PC-9 (cell line): ENCODE measurements at regions of chr3 and their contacts with region 1.

Region 1: GRCh38 chr3:24299806-24300626 is 194.6 kb downstream of the THRB start:
- DNase-seq: peak; percentile 75 to 91
- H3K4me3 ChIP-seq: no peak overlapping the region
- H3K27ac ChIP-seq: peak overlapping the region; percentile 72
- H3K4me1 ChIP-seq: peaks cover 24% of the 10 kb centered on the region
- H3K27me3 ChIP-seq: no peaks in the 10 kb centered on the region
- CTCF ChIP-seq: no peak

Region 2: DNA sequence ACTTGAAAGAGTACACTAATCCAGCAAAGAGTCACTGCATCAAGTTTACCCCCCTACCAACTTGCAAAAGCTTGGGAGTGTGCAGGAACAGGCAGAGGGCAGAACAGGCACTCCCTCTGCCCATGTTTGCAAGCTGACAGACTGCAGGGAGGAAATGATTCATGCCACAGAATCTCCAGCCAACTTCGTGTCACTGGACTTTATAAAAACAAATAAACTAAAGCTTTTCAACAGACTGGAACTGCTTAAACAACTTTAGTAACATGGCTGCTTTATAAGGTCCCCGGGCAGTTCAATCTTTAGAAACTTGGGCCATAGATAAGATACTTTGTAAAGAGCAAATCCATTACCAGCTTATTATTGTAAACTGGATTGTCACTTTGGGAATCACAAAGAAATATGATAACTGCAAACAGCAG is 65.2 kb after region 1 on chr3:
- CTCF ChIA-PET with region 1: no interaction called
- POLR2A ChIA-PET with region 1: no interaction called
- intact Hi-C with region 1: loop called (anchors 10 kb)
- DNase-seq: peak; percentile 62 to 90
- H3K4me3 ChIP-seq: no peak overlapping the region; the same call in 1 of the 2 replicates
- H3K27ac ChIP-seq: peak overlapping the region; percentile 69
- H3K4me1 ChIP-seq: peaks cover 40% of the 10 kb centered on the region
- H3K27me3 ChIP-seq: no peaks in the 10 kb centered on the region
- CTCF ChIP-seq: no peak

Region 3: GRCh38 chr3:24640330-24640877 is 340.4 kb after region 1 on chr3:
- CTCF ChIA-PET with region 1: no interaction called
- POLR2A ChIA-PET with region 1: no interaction called
- intact Hi-C with region 1: loop called (anchors 1 kb)
- DNase-seq: peak in 1 of 2 experiments; percentile 6
- H3K4me3 ChIP-seq: no peak overlapping the region
- H3K27ac ChIP-seq: no peak overlapping the region
- H3K4me1 ChIP-seq: no peaks in the 10 kb centered on the region
- H3K27me3 ChIP-seq: no peaks in the 10 kb centered on the region
- CTCF ChIP-seq: peak; percentile 65

Region 4: DNA sequence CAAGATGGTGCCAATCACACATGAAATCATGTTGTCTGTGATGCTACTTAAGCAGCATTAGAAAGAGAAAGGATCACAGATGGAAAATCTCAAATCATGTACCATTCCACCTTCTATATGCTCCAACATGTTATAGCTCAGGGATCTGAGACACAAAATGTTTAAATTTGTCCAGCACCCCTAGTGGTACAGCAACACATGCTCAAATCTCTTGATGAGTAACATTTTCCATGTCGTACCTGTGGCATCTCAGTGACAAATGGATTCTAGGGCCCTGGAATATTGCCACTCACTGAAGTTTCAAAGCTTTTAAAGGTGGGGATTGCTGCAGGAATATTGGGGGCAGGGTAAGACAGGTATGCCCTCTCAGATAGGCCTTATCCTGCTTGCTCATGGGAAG is 614.0 kb after region 1 on chr3:
- CTCF ChIA-PET with region 1: no interaction called
- POLR2A ChIA-PET with region 1: no interaction called
- intact Hi-C with region 1: no loop called
- DNase-seq: no peak
- H3K4me3 ChIP-seq: no peak overlapping the region
- H3K27ac ChIP-seq: no peak overlapping the region
- H3K4me1 ChIP-seq: no peaks in the 10 kb centered on the region
- H3K27me3 ChIP-seq: no peaks in the 10 kb centered on the region
- CTCF ChIP-seq: no peak